Prostate gland (tissue), 2 donors: ENCODE measurements at regions of chr9 and their contacts with region 1.

Region 1: GRCh38 chr9:94875300-94876020 is 149.0 kb downstream of the AOPEP start:
- DNase-seq: no peak
- H3K4me3 ChIP-seq: no peak overlapping the region
- H3K27ac ChIP-seq: no peak overlapping the region
- H3K4me1 ChIP-seq: no peaks in the 10 kb centered on the region
- H3K27me3 ChIP-seq: no peaks in the 10 kb centered on the region
- CTCF ChIP-seq: no peak
- POLR2A ChIP-seq: no peak

Region 2: GRCh38 chr9:94912700-94913249 is 37.3 kb after region 1 on chr9:
- intact Hi-C with region 1: loop called (anchors 5 kb)
- DNase-seq: no peak
- H3K4me3 ChIP-seq: no peak overlapping the region
- H3K27ac ChIP-seq: peak overlapping the region in 1 of 2 donors; percentile 72
- H3K4me1 ChIP-seq: peaks cover 26% of the 10 kb centered on the region
- H3K27me3 ChIP-seq: no peaks in the 10 kb centered on the region
- CTCF ChIP-seq: no peak
- POLR2A ChIP-seq: no peak